ENCODE measurements at regions of chr15 and their contacts with region 1.

Region 1: DNA sequence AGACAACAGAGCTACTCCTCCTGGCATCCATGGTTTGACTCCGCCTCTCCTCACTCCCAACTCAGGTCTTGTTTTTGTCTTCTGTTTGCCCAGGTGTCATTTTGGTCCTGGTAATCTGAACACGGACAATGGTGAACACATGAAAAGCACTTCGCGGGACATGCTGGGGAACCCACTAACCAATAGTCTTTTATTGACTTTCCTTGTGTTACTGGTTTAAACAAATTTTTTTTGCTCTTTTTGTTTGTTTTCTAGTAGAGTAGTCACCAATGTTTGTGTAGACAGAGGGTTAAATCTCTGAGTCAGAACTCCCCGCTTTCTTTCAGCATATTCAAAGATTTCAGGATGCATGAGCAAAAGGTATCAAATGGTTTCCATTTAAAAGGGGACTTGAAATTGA is 38.3 kb downstream of the LARP6 start:
- DNase-seq: no peak
- H3K4me3 ChIP-seq: no peak overlapping the region
- H3K4me3 Mint-ChIP-seq: no peak overlapping the region
- H3K27ac ChIP-seq: no peak overlapping the region
- H3K27ac Mint-ChIP-seq: no peak overlapping the region
- H3K4me1 ChIP-seq: no peaks in the 10 kb centered on the region
- H3K4me1 Mint-ChIP-seq: peaks cover 2% of the 10 kb centered on the region
- H3K27me3 ChIP-seq: no peaks in the 10 kb centered on the region
- H3K27me3 Mint-ChIP-seq: peaks cover 0 to 3% (median 0%) of the 10 kb centered on the region in 3 donors
- CTCF ChIP-seq: no peak

Region 2: DNA sequence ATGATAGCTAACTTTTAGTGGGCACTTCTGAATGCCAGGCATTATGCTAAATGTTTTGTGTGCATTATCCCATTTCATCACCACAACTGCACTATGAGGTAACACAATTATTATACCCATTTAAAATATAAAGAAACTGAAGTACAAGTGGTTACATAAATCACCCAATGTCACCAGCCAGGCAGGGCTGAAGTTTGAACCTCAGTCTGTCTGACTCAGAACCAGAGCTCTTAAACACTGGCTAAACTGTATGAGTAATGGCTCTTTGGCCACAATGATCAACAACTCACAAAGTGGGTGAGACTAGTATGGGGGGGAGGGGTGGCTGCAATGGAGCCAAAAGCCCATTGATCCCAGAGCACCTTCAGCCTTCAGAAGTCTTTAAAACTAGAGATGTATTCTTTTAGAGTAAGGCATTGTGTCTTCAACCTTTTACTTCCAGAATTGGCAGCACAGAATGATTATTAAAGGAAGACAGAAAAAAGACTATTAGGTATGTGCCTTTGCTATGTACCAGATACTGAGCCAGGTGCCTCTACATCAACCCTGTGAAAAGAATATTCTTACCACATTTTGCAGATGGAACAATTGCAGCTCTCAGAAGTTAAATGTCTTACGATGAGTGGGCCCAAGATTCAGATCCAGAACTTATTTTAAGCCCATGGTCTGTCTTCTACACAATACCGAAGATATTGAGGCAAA is 219.1 kb before region 1 on chr15:
- intact Hi-C with region 1: no loop called
- DNase-seq: no peak
- H3K4me3 ChIP-seq: no peak overlapping the region
- H3K4me3 Mint-ChIP-seq: no peak overlapping the region
- H3K27ac ChIP-seq: no peak overlapping the region
- H3K27ac Mint-ChIP-seq: no peak overlapping the region
- H3K4me1 ChIP-seq: no peaks in the 10 kb centered on the region
- H3K4me1 Mint-ChIP-seq: no peaks in the 10 kb centered on the region
- H3K27me3 ChIP-seq: no peaks in the 10 kb centered on the region
- H3K27me3 Mint-ChIP-seq: peaks cover 0 to 3% (median 0%) of the 10 kb centered on the region in 3 donors
- CTCF ChIP-seq: no peak

Region 3: GRCh38 chr15:70670680-70671079 is 145.0 kb before region 1 on chr15:
- intact Hi-C with region 1: loop called in 1 of 2 experiments (anchors 10 kb)
- DNase-seq: no peak
- H3K4me3 ChIP-seq: no peak overlapping the region
- H3K4me3 Mint-ChIP-seq: no peak overlapping the region
- H3K27ac ChIP-seq: no peak overlapping the region
- H3K27ac Mint-ChIP-seq: no peak overlapping the region
- H3K4me1 ChIP-seq: peaks cover 4 to 16% of the 10 kb centered on the region in 2 donors
- H3K4me1 Mint-ChIP-seq: peaks cover 8% of the 10 kb centered on the region
- H3K27me3 ChIP-seq: no peaks in the 10 kb centered on the region
- H3K27me3 Mint-ChIP-seq: peaks cover 0 to 3% (median 0%) of the 10 kb centered on the region in 3 donors
- CTCF ChIP-seq: no peak

Region 4: DNA sequence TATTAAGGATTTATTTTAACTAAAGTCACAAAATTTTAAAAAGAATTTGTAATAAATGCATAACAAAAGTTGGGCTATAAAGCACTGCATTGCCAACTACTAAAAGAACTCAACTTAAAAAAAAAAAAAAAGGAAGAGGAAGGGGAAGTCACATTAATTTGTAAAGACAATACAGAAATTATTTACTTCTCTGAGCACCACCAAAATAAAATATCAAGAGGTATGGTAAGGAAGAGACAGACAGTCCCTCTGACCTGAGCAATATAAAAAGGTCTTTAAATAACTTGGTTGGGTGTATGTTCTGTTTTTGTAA is 135.8 kb before region 1 on chr15:
- intact Hi-C with region 1: loop called (anchors 10 kb)
- DNase-seq: no peak
- H3K4me3 ChIP-seq: no peak overlapping the region
- H3K4me3 Mint-ChIP-seq: no peak overlapping the region
- H3K27ac ChIP-seq: no peak overlapping the region
- H3K27ac Mint-ChIP-seq: no peak overlapping the region
- H3K4me1 ChIP-seq: no peaks in the 10 kb centered on the region
- H3K4me1 Mint-ChIP-seq: peaks cover 5% of the 10 kb centered on the region
- H3K27me3 ChIP-seq: no peaks in the 10 kb centered on the region
- H3K27me3 Mint-ChIP-seq: peaks cover 0 to 1% (median 0%) of the 10 kb centered on the region in 3 donors
- CTCF ChIP-seq: peak; percentile 27

Region 5: DNA sequence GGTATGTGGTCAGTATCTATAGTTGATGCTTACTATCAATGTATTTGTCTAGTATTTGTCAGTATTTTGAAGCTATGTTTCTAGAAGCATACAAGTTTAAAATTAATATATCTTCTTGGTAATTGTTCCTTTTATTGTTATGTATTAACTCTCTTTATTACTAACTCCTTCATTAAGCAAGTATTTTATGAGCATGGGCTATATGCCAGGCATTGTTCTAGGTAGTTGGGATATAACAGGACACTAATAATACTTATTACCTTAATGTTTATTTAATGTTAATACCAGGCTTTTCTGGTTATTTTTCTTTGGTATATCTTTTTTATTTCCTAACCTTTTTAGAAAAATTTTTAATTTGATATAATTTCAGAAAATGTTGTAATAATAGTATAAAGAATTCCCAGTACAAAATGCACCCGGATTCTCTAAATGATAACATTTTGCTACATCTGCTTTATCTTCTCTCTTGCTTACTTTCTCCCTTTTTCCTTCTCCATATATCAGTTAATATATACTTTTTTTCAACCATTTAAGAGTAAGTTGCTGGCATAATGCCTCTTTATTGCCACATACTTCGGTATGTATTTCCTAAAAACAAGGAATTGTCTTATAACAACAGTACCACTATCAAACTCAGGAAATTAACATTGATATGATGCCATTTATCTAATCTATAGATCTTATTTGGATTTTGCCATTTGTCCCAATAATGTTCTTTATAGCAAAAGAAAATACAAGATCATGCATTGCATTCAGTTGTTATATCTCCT is 107.9 kb after region 1 on chr15:
- intact Hi-C with region 1: no loop called
- DNase-seq: no peak
- H3K4me3 ChIP-seq: no peak overlapping the region
- H3K4me3 Mint-ChIP-seq: no peak overlapping the region
- H3K27ac ChIP-seq: no peak overlapping the region
- H3K27ac Mint-ChIP-seq: no peak overlapping the region
- H3K4me1 ChIP-seq: no peaks in the 10 kb centered on the region
- H3K4me1 Mint-ChIP-seq: peaks cover 11% of the 10 kb centered on the region
- H3K27me3 ChIP-seq: no peaks in the 10 kb centered on the region
- H3K27me3 Mint-ChIP-seq: peaks cover 0 to 6% (median 5%) of the 10 kb centered on the region in 3 donors
- CTCF ChIP-seq: no peak